Right cardiac atrium (tissue), 5 donors: ENCODE measurements at regions of chr17 and their contacts with region 1.

Region 1: GRCh38 chr17:52032454-52032853 is 126.1 kb downstream of the CA10 start:
- DNase-seq: no peak
- ATAC-seq: no peak
- H3K4me3 ChIP-seq: no peak overlapping the region
- H3K27ac ChIP-seq: no peak overlapping the region
- H3K4me1 ChIP-seq: no peaks in the 10 kb centered on the region
- H3K27me3 ChIP-seq: no peaks in the 10 kb centered on the region

Region 2: DNA sequence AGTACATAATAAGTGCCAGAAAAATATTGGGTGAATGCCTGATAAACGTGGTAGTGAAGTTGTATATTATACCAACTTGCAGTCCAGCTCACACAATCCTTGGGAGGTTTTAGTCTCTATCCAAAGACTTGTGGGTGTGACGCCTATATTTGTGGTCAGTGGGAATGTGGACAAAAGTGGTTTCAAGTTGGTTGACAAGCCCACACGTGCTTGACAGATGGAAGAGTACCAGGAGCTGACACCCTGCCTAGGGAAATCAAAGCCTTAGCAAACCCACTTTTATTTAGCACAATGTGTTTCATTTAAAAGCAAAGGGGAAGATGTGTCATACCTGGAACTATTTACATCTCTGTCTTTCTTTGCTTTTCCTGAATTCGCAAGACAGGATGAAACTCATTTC is 47.0 kb after region 1 on chr17:
- intact Hi-C with region 1: loop called in 1 of 4 experiments (anchors 5 kb)
- DNase-seq: no peak
- ATAC-seq: no peak
- H3K4me3 ChIP-seq: no peak overlapping the region
- H3K27ac ChIP-seq: no peak overlapping the region
- H3K4me1 ChIP-seq: no peaks in the 10 kb centered on the region
- H3K27me3 ChIP-seq: no peaks in the 10 kb centered on the region